ENCODE measurements at regions of chr19 and their contacts with region 1.

Region 1: DNA sequence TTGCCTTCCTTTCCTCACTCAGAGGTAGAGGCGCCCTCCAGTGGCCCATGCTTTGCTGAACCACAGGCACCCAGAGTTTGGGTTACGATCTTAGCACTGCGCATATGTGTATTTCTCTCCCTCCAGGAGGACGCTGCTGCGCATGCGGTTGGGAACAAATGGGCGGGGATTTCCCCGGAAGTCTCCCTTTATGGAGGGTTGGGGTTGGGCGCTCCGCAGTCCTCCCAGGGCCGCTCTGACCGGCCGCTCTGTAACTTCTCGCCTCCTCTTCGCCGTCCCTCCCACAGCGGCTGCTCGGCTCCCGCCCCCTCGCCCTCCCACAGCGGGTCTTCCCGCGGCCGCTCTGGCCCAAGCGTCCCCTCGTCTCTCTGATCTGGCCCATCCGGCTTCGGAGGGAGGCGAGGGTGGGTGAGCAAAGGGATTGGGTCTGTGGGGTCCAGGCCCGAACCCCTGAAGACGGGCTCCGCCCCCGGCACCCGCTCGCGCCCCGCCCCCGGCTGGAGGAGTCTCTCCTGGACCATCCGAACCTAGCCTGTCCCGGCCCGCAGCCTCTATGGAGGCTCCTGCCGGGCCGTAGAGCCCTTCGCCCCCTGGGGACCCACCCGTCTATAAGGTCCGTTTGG is at the start of gene MEGF8:
- DNase-seq: peak; percentile 98
- H3K4me3 ChIP-seq: peak within 1 kb of the TSS; percentile 68 to 95 (median 69)
- H3K27ac ChIP-seq: peak within 1 kb of the TSS; percentile 42
- H3K4me1 ChIP-seq: peaks cover 13% of the 10 kb centered on the region
- H3K27me3 ChIP-seq: no peaks in the 10 kb centered on the region
- CTCF ChIP-seq: peak; percentile 93 to 96
- total RNA-seq, gene MEGF8: 16.6 to 29.3 TPM

Region 2: DNA sequence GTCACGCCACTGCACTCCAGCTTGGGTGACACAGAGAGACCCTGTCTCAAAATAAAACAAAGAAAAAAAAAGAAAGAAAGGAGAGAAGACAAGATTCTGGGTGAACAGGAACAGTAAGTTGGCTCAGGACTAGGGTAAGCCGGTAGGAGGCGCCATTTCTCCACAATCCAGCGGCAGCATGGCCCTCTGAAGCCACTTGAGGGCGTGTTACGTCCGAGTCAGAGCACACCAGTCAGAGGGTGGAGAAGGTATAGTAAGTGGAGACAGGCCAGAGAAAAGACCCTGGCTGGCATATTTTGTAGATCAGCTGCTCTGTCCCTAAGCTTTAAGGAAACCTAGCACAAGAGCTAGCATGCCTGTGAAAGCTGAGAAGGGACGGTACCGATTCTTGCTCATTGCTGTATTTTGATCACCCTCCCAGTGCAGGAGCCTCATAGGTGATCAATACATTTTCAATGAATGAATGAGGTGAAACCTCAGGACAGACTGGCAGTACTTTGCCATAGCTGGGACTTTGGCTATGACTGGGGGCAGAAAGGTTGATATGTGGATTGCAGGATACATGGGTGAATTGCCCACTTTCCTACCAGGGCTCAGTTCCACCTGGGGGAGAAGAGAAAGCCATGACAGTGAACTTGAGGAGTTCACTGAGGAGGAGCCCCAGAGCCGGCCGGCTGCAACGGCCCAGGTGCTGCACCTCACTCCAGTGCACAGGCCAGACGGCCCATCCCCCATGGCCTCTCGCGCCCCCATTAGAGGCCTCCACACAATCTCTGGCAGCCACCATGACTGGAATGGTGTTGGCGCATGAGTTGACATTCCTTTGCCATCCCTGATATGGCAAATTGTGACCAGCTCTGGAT is 216.6 kb before region 1 on chr19:
- CTCF ChIA-PET with region 1: no interaction called
- dilution Hi-C with region 1: loop called (anchors 5 kb)
- in situ Hi-C with region 1: no loop called
- intact Hi-C with region 1: loop called (anchors 1 kb)
- DNase-seq: peak; percentile 68
- H3K4me3 ChIP-seq: no peak overlapping the region
- H3K27ac ChIP-seq: no peak overlapping the region
- H3K4me1 ChIP-seq: peaks cover 35% of the 10 kb centered on the region
- H3K27me3 ChIP-seq: no peaks in the 10 kb centered on the region
- CTCF ChIP-seq: peak; percentile 100

Region 3: GRCh38 chr19:42132851-42133528 is 192.4 kb before region 1 on chr19:
- CTCF ChIA-PET with region 1: no interaction called
- dilution Hi-C with region 1: no loop called
- in situ Hi-C with region 1: no loop called
- intact Hi-C with region 1: loop called (anchors 1 kb)
- DNase-seq: peak; percentile 41
- H3K4me3 ChIP-seq: peak overlapping the region in 1 of 3 experiments; percentile 38
- H3K27ac ChIP-seq: no peak overlapping the region
- H3K4me1 ChIP-seq: peaks cover 33% of the 10 kb centered on the region
- H3K27me3 ChIP-seq: no peaks in the 10 kb centered on the region
- CTCF ChIP-seq: peak; percentile 55 to 94

Region 4: GRCh38 chr19:42229855-42230351 is 95.5 kb before region 1 on chr19:
- CTCF ChIA-PET with region 1: no interaction called
- dilution Hi-C with region 1: loop called (anchors 5 kb)
- in situ Hi-C with region 1: no loop called
- intact Hi-C with region 1: no loop called
- DNase-seq: no peak
- H3K4me3 ChIP-seq: no peak overlapping the region
- H3K27ac ChIP-seq: no peak overlapping the region
- H3K4me1 ChIP-seq: peaks cover 16% of the 10 kb centered on the region
- H3K27me3 ChIP-seq: no peaks in the 10 kb centered on the region
- CTCF ChIP-seq: no peak

Region 5: GRCh38 chr19:42283143-42284065 is 42.0 kb before region 1 on chr19:
- CTCF ChIA-PET with region 1: no interaction called
- dilution Hi-C with region 1: no loop called
- in situ Hi-C with region 1: no loop called
- intact Hi-C with region 1: loop called (anchors 2 kb)
- DNase-seq: peak; percentile 91
- H3K4me3 ChIP-seq: peak overlapping the region in 2 of 3 experiments; percentile 44 to 48
- H3K27ac ChIP-seq: peak overlapping the region; percentile 43
- H3K4me1 ChIP-seq: peaks cover 56% of the 10 kb centered on the region
- H3K27me3 ChIP-seq: no peaks in the 10 kb centered on the region
- CTCF ChIP-seq: no peak

Region 6: GRCh38 chr19:42380155-42380554 is 54.8 kb after region 1 on chr19:
- CTCF ChIA-PET with region 1: no interaction called
- dilution Hi-C with region 1: loop called (anchors 5 kb)
- in situ Hi-C with region 1: no loop called
- intact Hi-C with region 1: no loop called
- DNase-seq: no peak
- H3K4me3 ChIP-seq: no peak overlapping the region
- H3K27ac ChIP-seq: no peak overlapping the region
- H3K4me1 ChIP-seq: peaks cover 5% of the 10 kb centered on the region
- H3K27me3 ChIP-seq: no peaks in the 10 kb centered on the region
- CTCF ChIP-seq: no peak

Region 7: GRCh38 chr19:42423462-42424344 is 98.3 kb after region 1 on chr19:
- CTCF ChIA-PET with region 1: interaction called, 3 read pairs
- dilution Hi-C with region 1: loop called (anchors 5 kb)
- in situ Hi-C with region 1: no loop called
- intact Hi-C with region 1: loop called (anchors 1 kb)
- DNase-seq: peak; percentile 86
- H3K4me3 ChIP-seq: peak overlapping the region; percentile 59 to 66 (median 63)
- H3K27ac ChIP-seq: peak overlapping the region; percentile 12
- H3K4me1 ChIP-seq: peaks cover 45% of the 10 kb centered on the region
- H3K27me3 ChIP-seq: no peaks in the 10 kb centered on the region
- CTCF ChIP-seq: no peak